Activated CD4-positive, alpha-beta T cell treated with anti-CD3 and anti-CD28 coated beads for 36 hours (primary cell): ENCODE measurements at regions of chr19 and their contacts with region 1.

Region 1: DNA sequence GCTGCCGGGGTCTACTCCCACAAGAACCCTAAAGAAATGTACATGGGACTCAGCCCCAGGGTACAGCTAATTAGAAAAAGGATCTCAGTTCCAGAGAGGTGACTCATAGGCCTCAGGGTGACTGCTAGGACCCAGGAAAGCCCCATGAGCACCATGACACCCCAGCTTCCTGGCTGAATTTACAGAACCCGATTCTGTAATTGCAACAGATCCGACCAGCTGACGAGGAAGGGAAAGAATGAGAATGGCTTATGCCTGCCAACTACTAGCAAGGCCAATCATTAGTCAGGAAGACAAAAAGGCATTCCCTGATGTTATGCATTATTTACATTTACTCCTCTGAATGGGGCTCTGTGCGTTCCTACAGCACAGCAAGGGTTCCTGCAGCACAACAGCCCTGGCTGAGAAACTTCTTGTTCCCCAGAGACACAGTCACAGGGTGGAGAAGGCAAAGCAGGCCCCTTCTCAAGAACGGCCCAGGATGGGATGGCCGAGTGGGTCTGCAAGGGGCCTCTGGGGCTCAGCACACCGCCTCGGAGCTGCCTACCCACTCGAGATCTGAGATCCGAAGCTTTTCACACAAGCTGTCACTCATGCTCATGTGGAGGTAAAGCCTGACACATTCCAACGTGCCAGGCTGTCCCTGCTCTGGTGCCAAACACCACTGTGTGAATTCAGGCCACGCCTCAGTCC is 27.2 kb downstream of the PBX4 start:
- DNase-seq: peak; percentile 85
- ATAC-seq: peak; percentile 91
- H3K4me3 Mint-ChIP-seq: peak overlapping the region; percentile 27
- H3K27ac Mint-ChIP-seq: peak overlapping the region; percentile 82
- H3K4me1 Mint-ChIP-seq: peaks cover 66% of the 10 kb centered on the region
- H3K27me3 Mint-ChIP-seq: no peaks in the 10 kb centered on the region

Region 2: DNA sequence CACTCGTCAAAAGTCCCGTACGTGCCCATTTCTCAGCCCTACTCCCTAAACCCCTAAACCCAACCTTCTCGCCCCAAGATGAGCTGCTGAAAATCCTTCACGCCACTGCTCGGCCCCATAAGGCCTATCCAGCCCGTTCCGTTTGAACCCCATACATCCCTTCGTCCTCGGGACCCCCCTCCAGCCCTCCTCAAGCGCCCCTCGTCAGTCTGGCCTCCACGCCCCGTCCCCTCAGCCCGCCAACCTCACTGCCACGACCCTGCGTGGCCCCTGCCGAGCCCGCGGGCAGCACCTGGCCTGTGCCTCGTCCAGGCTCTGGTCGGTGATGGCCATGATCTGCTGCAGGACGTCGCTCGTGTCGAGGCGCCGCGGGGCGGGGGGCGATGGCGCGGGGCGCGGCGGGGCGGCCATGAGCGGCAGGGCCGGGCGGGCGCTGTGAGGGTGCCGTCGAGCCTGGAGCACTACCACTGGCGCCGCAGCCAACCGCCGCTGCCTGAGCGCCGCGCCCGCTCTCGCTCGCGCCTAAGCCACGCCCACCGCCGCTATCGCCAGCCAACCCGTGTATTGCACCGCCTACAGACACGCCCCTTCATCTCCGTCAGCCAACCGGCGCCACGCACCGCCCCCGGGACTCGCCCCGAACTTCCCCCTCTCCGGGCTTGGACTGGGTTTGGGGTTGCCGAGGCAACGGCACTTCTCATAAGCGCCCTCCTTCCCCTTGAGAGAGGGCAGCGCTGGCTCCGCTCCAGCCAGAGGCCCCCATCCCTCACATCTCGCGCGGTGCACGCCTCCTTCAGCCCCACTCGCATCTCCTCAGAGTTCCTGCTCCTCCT is 27.2 kb after region 1 on chr19 and contains the start of gene PBX4:
- CTCF ChIA-PET with region 1: no interaction called
- POLR2A ChIA-PET with region 1: no interaction called
- intact Hi-C with region 1: loop called in 1 of 2 experiments (anchors 1 kb)
- DNase-seq: peak; percentile 99
- ATAC-seq: peak; percentile 93
- H3K4me3 Mint-ChIP-seq: peak within 1 kb of the TSS; percentile 91
- H3K27ac Mint-ChIP-seq: peak within 1 kb of the TSS; percentile 90
- H3K4me1 Mint-ChIP-seq: peaks cover 46% of the 10 kb centered on the region
- H3K27me3 Mint-ChIP-seq: no peaks in the 10 kb centered on the region
- total RNA-seq, gene PBX4: 19.4 to 21.2 TPM

Region 3: DNA sequence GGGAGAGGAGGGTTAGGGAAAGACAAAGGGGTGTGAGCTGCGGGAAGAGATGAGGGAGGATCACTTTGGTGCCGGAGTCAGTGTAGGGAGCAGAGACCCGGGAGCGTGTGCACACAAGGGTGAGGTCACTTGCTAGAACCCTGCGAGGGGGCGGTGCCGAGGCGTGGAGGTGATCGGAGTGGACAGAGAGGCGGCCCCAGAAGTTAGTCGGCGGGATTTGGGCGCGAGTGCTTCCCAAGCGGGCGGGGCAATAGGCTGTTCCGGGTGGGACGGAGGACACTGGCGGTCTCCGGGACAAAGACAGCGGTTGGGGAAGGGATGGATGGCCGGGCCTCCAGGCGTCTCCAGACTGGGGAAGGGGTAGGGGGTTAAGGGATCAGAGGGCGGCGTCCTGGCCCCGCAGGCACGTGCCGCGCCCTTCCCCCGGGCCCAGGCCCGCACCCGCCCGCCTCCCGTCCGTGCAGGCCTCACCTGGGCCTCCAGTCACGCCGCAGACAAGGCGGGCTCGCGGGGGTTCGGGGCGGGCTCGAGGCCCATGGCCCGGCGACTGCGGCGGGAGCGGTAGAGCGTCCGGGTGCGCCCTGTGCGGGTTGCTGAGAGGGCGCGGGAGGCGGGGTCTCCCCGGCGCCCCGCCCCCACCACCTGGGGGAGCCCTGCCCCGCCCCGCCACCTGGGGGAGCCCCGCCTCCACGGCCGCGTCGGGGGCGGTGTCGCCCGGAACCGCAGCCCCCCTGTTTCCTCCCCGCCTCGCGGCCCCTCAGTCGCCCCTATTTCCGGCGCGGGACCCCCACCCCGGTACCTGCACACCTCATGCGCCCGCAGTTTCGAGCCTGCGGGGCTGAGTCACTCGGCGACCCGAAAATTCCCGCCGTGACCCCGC is 36.6 kb after region 1 on chr19 and contains the start of gene LPAR2:
- CTCF ChIA-PET with region 1: interaction called, 3 read pairs
- POLR2A ChIA-PET with region 1: no interaction called
- intact Hi-C with region 1: loop called (anchors 1 to 5 kb)
- DNase-seq: peak; percentile 81
- ATAC-seq: peak; percentile 74
- H3K4me3 Mint-ChIP-seq: peak within 1 kb of the TSS; percentile 80
- H3K27ac Mint-ChIP-seq: peak within 1 kb of the TSS; percentile 79
- H3K4me1 Mint-ChIP-seq: peaks cover 23% of the 10 kb centered on the region
- H3K27me3 Mint-ChIP-seq: no peaks in the 10 kb centered on the region
- total RNA-seq, gene LPAR2: 21.6 to 33.2 TPM